Right cardiac atrium (tissue), 5 donors: ENCODE measurements at regions of chr16 and their contacts with region 1.

Region 1: DNA sequence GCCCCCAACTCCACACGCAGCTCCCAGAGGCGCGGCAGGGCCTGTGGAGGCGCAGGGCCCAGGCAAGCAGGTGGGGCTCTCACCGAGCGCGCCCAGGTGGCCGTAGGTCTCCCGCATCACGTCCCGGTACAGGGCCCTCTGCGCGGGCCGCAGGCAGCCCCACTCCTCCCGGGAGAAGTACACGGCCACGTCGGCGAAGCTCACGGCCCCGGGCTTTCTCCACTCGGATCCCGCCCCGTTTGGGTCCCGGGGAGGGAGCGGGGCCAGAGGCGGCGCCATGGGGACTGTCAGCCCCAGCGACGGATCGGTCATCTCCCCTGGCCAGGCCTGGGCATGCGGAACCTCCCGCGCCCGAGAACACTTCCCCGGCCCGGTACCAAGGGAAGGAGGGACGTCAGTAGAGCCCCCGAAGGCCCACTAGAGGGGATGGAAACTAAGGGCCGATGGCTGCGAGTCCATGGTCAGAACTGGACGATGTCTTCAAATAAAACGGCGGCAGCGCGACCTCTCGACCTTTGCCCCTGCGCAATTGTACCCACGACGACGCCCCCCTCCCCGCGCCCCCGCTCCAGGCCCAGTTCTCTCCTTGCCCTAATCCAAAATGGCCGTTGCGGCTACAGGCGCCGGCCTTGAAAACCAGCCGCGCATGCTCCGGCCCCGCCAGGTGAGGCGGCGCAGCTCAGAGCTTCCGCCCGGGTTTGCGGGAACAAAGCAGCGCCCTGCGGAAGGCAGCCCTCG is at the start of gene ZNF747:
- DNase-seq: peak; percentile 93 to 98 (median 97)
- ATAC-seq: peak; percentile 92 to 94
- H3K4me3 ChIP-seq: peak within 1 kb of the TSS; percentile 65
- H3K27ac ChIP-seq: peak within 1 kb of the TSS; percentile 97
- H3K4me1 ChIP-seq: peaks cover 4% of the 10 kb centered on the region
- H3K27me3 ChIP-seq: no peaks in the 10 kb centered on the region
- total RNA-seq, gene ZNF747: 9.1 to 14.6 (median 12.6) TPM

Region 2: DNA sequence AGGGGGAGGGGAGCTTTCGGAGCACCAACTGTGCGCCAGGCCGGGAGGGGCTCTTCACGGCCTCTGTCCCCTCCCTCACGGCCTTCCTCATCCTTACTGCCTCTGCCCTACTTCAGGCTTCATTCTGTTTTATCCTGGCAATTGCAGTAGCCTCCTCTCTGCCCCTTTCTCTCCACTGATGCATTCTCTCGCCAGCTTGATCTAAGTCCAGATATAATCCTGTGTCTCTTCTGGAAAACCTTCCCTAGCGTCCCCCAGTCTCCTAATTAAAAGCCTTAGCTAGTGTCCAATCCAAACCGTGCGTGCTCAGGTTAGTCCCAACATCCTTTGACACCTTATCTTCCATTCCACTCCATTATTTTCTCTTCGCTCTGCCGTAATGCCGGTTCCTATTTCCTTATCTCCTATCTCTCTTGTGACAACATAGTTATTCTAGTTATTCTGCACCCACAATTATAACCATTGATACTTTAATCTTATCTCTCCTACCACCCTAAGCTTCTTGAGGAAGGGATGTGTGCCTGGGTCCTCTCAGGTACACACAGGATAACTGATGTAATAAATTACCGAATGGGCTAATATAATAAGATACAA is 138.4 kb before region 1 on chr16:
- intact Hi-C with region 1: no loop called
- DNase-seq: no peak
- ATAC-seq: no peak
- H3K4me3 ChIP-seq: peak overlapping the region; percentile 86
- H3K27ac ChIP-seq: peak overlapping the region; percentile 14
- H3K4me1 ChIP-seq: no peaks in the 10 kb centered on the region
- H3K27me3 ChIP-seq: no peaks in the 10 kb centered on the region

Region 3: GRCh38 chr16:30557957-30558788 is 23.6 kb after region 1 on chr16 and contains the start of gene ZNF764:
- intact Hi-C with region 1: loop called in 1 of 4 experiments (anchors 1 kb)
- DNase-seq: peak; percentile 98 to 99 (median 99)
- ATAC-seq: peak; percentile 97
- H3K4me3 ChIP-seq: peak within 1 kb of the TSS; percentile 68
- H3K27ac ChIP-seq: peak within 1 kb of the TSS; percentile 94
- H3K4me1 ChIP-seq: peaks cover 7% of the 10 kb centered on the region
- H3K27me3 ChIP-seq: no peaks in the 10 kb centered on the region
- total RNA-seq, gene ZNF764: 9.6 to 12.5 (median 12.3) TPM

Region 4: DNA sequence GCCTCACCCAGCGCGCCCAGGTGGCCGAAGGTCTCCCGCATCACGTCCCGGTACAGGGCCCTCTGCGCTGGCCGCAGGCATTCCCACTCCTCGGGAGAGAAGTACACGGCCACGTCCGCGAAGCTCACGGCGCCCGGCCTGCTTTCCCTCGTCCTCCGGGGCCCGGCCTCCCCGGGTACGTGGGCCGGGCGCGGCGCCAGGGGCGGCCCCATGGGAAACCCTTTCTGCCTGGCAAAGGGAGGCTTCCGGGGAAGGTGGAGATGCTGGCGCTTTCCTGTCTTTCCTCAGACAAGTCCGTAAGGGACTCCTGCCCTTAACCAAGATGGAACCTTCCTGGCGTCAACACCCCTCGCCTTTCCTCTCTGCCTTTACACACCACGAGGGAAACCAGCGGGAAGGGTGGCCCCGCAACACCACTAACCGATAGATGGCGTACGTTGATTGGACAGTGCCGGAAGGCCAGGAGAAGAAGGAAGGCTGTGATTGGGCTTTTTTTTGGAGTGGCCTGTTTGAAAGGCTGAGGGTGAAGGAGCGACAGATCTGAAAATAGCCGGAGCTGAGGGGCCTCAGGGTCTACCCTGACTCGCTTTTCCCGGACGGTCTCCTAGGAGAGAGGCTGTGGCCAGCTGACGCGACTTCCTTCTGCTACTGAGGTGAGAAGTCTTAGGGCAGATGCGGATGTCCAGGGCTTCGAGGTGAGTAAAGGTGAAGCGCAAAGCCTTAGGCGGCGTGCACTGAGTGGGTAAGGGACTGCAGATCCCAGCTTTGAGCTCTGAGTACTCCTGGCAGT is 51.1 kb after region 1 on chr16 and contains the start of gene ZNF785:
- intact Hi-C with region 1: loop called in 1 of 4 experiments (anchors 10 kb)
- DNase-seq: peak; percentile 97 to 98 (median 97)
- ATAC-seq: peak; percentile 98 to 99
- H3K4me3 ChIP-seq: peak within 1 kb of the TSS; percentile 49
- H3K27ac ChIP-seq: peak within 1 kb of the TSS; percentile 86
- H3K4me1 ChIP-seq: no peaks in the 10 kb centered on the region
- H3K27me3 ChIP-seq: no peaks in the 10 kb centered on the region
- total RNA-seq, gene ZNF785: 7.9 to 9.7 (median 9.2) TPM

Region 5: GRCh38 chr16:30829130-30830071 is 294.9 kb after region 1 on chr16:
- intact Hi-C with region 1: no loop called
- DNase-seq: no peak
- ATAC-seq: no peak
- H3K4me3 ChIP-seq: no peak overlapping the region
- H3K27ac ChIP-seq: no peak overlapping the region
- H3K4me1 ChIP-seq: no peaks in the 10 kb centered on the region
- H3K27me3 ChIP-seq: no peaks in the 10 kb centered on the region